ENCODE measurements at regions of chr10 and their contacts with region 1.

Region 1: GRCh38 chr10:97792141-97792721 is 20.4 kb upstream of the SFRP5 start:
- DNase-seq: peak; percentile 74
- ATAC-seq: no peak; the same call in 1 of the 2 replicates
- H3K4me3 ChIP-seq: no peak overlapping the region
- H3K27ac ChIP-seq: no peak overlapping the region
- H3K4me1 ChIP-seq: no peaks in the 10 kb centered on the region
- H3K27me3 ChIP-seq: no peaks in the 10 kb centered on the region
- CTCF ChIP-seq: peak; percentile 88

Region 2: GRCh38 chr10:97612386-97612785 is 179.8 kb before region 1 on chr10:
- CTCF ChIA-PET with region 1: no interaction called
- POLR2A ChIA-PET with region 1: no interaction called
- intact Hi-C with region 1: no loop called
- DNase-seq: peak; percentile 72
- ATAC-seq: peak; percentile 98
- H3K4me3 ChIP-seq: no peak overlapping the region
- H3K27ac ChIP-seq: no peak overlapping the region
- H3K4me1 ChIP-seq: no peaks in the 10 kb centered on the region
- H3K27me3 ChIP-seq: no peaks in the 10 kb centered on the region
- CTCF ChIP-seq: peak; percentile 75

Region 3: GRCh38 chr10:97810446-97810845 is 18.2 kb after region 1 on chr10:
- CTCF ChIA-PET with region 1: no interaction called
- POLR2A ChIA-PET with region 1: interaction called, 12 read pairs
- intact Hi-C with region 1: no loop called
- DNase-seq: peak; percentile 51
- ATAC-seq: no peak
- H3K4me3 ChIP-seq: no peak overlapping the region
- H3K27ac ChIP-seq: no peak overlapping the region; the same call in 1 of the 2 replicates
- H3K4me1 ChIP-seq: peaks cover 17% of the 10 kb centered on the region
- H3K27me3 ChIP-seq: no peaks in the 10 kb centered on the region
- CTCF ChIP-seq: no peak

Region 4: DNA sequence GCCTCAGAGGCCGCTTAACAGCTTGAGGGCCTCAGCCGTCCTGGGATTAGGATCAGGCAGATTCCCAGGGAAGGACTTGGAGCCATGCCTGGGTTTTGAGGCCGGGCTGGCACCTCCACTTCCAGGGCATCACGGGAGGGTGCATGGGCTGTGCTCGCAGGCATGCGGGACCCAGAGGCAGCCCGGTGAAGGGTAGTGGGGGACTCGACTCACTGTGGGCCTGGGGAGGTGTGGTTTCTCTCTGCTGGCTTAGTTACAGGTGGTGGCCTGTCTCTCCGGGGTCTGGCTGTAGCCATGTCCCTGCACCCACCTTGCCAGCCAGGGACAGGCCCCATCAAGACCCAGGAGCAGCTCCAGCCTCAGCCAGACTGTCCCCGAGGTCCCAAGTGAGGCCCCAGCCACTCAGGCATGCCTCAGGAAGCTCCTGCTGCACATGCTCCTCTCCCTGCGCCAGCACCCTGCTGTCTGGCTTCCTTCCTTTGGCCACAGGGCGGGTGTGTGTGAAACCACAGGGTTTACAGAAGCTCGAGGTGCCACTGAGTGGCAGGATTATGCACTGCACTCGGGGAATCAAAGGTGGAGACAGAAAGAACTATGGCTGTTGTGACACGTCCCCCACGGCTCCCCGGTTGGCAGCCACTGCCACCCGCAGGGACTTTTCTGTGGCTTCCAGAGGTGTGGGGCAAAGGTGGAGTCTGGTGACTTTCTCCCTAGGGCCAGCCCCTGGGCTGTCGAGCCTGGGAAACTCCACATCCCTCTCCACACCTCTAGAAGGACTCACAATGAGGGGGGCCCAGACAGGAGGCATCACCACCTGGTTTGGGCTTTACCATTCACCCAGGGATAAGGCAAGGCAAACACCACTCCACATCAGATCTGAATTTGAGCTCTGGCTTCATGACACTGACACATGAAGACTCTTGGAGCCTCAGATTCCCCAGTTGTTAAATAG is 77.1 kb after region 1 on chr10:
- CTCF ChIA-PET with region 1: interaction called, 4 read pairs
- POLR2A ChIA-PET with region 1: no interaction called
- intact Hi-C with region 1: loop called (anchors 1 kb)
- DNase-seq: peak; percentile 90
- ATAC-seq: peak; percentile 99
- H3K4me3 ChIP-seq: no peak overlapping the region; the same call in 1 of the 2 replicates
- H3K27ac ChIP-seq: no peak overlapping the region
- H3K4me1 ChIP-seq: peaks cover 12% of the 10 kb centered on the region
- H3K27me3 ChIP-seq: no peaks in the 10 kb centered on the region
- CTCF ChIP-seq: peak; percentile 84

Region 5: GRCh38 chr10:98041372-98042043 is 249.3 kb after region 1 on chr10:
- CTCF ChIA-PET with region 1: no interaction called
- POLR2A ChIA-PET with region 1: no interaction called
- intact Hi-C with region 1: loop called (anchors 2 kb)
- DNase-seq: peak; percentile 68
- ATAC-seq: peak; percentile 80
- H3K4me3 ChIP-seq: no peak overlapping the region
- H3K27ac ChIP-seq: no peak overlapping the region
- H3K4me1 ChIP-seq: no peaks in the 10 kb centered on the region
- H3K27me3 ChIP-seq: peaks cover 37% of the 10 kb centered on the region
- CTCF ChIP-seq: peak; percentile 77

Measured in PC-3 (cell line).